BJ (cell line): ENCODE measurements at regions of chr2 and their contacts with region 1.

Region 1: DNA sequence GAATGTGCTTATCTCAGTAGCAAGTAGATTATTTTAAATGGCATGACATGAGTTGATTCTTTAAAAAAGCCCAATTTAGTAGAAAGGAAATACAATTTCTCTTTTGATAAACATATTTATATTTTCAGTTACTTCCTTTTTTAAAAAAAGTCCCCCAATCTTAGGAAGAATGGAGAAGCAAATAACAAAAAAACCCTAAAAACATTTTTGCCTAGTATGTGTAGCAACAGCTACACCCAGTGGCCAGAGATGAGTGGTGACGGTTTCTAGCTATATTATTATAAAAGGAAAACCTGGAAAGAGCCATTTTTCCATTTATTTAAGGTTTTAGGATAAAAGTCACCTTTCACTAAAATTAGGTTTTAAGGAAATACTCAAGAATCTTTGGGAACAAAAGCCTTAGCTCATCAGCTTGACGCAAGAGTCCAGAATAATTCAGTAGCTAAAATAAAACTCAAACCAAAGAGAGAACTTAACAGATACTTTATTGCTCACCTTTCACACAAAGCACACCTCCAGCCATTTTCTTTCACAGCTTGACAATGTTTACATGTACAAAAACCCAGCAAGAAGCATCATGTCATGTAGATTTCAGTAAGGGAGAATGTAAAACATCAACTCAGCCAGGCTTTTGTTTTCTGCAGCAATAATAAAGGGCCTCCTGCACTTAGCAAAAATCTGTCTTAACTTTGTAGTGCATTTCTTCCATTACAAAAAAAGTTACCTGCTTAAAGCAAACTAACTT is 15.7 kb downstream of the FAM98A start:
- DNase-seq: no peak
- H3K4me3 ChIP-seq: no peak overlapping the region
- H3K27me3 ChIP-seq: no peaks in the 10 kb centered on the region
- CTCF ChIP-seq: peak; percentile 77

Region 2: GRCh38 chr2:33412920-33413319 is 170.4 kb before region 1 on chr2:
- CTCF ChIA-PET with region 1: interaction called, 24 read pairs
- POLR2A ChIA-PET with region 1: no interaction called
- DNase-seq: no peak
- H3K4me3 ChIP-seq: no peak overlapping the region
- H3K27me3 ChIP-seq: no peaks in the 10 kb centered on the region
- CTCF ChIP-seq: peak; percentile 47

Region 3: GRCh38 chr2:33441235-33441810 is 142.0 kb before region 1 on chr2:
- CTCF ChIA-PET with region 1: interaction called, 23 read pairs
- POLR2A ChIA-PET with region 1: no interaction called
- DNase-seq: no peak
- H3K4me3 ChIP-seq: no peak overlapping the region
- H3K27me3 ChIP-seq: no peaks in the 10 kb centered on the region
- CTCF ChIP-seq: peak; percentile 87

Region 4: DNA sequence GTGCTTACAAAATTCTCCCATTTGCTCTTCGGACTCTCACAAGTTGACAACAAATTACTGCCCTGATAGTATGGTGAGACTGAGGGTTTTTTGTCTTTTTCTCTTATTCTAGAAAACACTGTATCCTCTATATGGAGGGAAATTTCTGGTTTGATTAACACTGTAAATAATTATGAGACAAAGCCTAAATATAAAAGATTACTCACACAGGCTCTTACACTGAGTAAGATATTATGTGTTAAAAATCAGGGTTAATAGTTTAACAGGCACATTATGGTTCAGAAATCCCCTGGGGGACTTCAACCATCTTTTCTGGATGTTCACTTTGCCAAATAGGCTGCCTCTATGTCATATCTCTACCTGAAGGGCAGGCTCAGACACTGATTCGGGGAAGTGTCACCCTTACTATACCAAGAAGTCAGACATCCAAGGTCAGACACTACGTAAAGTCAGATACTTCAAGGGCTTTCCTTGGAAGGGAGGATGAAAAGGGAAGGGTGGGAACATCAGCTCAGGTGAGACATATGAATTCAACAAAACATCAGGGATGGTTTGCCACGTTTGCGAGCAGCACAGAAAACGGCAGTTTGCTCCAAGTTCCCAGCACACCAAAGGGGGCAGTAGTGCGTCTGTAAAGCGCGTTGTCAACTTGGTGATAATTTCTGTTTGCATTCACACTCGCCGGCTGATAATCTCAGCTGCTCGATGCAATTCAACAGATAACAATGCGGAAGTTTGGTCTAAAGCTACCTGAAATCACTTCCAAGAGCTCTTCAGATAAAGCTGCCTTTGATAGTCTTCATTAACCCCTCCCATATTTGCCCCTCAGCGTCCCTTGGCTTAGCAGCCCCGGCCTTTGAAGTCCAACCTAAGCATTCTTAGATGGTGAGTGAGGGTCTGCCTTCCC is 107.9 kb before region 1 on chr2:
- CTCF ChIA-PET with region 1: interaction called, 25 read pairs
- POLR2A ChIA-PET with region 1: no interaction called
- DNase-seq: peak; percentile 29
- H3K4me3 ChIP-seq: peak overlapping the region; percentile 59
- H3K27me3 ChIP-seq: no peaks in the 10 kb centered on the region
- CTCF ChIP-seq: peak; percentile 87

Region 5: DNA sequence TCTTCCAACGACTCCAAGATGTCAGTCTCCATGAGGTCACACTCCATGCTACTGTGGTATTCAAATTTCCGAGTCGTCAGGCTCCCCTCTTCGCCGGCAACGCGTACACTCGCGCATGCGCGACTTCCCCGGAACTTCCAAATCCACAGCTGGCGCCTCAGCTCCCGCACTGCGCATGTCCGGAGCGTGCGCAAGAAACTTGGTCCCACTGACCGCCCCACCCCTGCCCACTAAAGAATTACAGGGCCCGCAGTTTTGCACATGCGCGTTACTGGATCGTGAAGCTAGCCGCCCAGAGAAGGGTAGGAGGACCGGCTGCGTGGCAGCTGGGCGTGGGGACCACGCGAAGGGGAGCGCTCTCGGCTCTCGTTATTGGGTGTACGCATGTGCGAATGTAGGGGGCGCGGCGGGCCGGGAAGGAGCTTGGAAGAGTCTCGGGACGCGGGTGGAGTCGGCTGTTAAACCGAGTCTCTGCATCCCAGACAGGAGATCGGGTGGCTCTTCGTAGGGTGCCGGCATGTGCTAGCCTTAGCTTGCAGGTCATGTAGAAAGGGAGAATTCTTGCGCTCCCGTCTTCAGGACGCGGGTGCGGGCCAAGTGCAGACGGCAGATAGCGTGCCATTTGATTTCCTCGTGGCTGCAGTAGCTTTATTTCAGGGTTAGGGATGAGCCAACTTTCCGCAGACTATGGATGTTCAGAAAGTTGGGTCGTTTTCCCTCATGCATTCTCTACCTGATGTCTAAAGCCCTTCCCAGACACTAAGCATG is 16.0 kb after region 1 on chr2 and contains the start of gene FAM98A:
- CTCF ChIA-PET with region 1: interaction called, 10 read pairs
- POLR2A ChIA-PET with region 1: no interaction called
- DNase-seq: peak; percentile 97
- H3K4me3 ChIP-seq: peak within 1 kb of the TSS; percentile 91
- H3K27me3 ChIP-seq: no peaks in the 10 kb centered on the region
- CTCF ChIP-seq: peak; percentile 26; the same call in 1 of the 2 replicates
- polyA plus RNA-seq, gene FAM98A: 98.7 and 135 TPM in 2 replicates